ENCODE measurements at regions of chr16 and their contacts with region 1.

Region 1: GRCh38 chr16:50806099-50807062 is 64.5 kb downstream of the CYLD start:
- DNase-seq: peak; percentile 79 to 83 (median 83)
- ATAC-seq: peak; percentile 93 to 96 (median 94)
- H3K4me3 ChIP-seq: peak overlapping the region; percentile 13 to 41 (median 40)
- H3K27ac ChIP-seq: peak overlapping the region in 2 of 3 donors; percentile 57 to 69
- H3K4me1 ChIP-seq: peaks cover 0 to 12% (median 2%) of the 10 kb centered on the region in 4 donors
- H3K27me3 ChIP-seq: no peaks in the 10 kb centered on the region
- CTCF ChIP-seq: peak; percentile 84 to 92 (median 91)
- POLR2A ChIP-seq: no peak

Region 2: GRCh38 chr16:50210266-50211038 is 595.9 kb before region 1 on chr16:
- intact Hi-C with region 1: loop called in 1 of 2 experiments (anchors 10 kb)
- DNase-seq: peak; percentile 68 to 77 (median 76)
- ATAC-seq: peak; percentile 92 to 97 (median 92)
- H3K4me3 ChIP-seq: no peak overlapping the region
- H3K27ac ChIP-seq: peak overlapping the region in 1 of 3 donors; percentile 45
- H3K4me1 ChIP-seq: peaks cover 0 to 34% (median 10%) of the 10 kb centered on the region in 4 donors
- H3K27me3 ChIP-seq: no peaks in the 10 kb centered on the region
- CTCF ChIP-seq: peak; percentile 62 to 74 (median 69)
- POLR2A ChIP-seq: no peak

Region 3: DNA sequence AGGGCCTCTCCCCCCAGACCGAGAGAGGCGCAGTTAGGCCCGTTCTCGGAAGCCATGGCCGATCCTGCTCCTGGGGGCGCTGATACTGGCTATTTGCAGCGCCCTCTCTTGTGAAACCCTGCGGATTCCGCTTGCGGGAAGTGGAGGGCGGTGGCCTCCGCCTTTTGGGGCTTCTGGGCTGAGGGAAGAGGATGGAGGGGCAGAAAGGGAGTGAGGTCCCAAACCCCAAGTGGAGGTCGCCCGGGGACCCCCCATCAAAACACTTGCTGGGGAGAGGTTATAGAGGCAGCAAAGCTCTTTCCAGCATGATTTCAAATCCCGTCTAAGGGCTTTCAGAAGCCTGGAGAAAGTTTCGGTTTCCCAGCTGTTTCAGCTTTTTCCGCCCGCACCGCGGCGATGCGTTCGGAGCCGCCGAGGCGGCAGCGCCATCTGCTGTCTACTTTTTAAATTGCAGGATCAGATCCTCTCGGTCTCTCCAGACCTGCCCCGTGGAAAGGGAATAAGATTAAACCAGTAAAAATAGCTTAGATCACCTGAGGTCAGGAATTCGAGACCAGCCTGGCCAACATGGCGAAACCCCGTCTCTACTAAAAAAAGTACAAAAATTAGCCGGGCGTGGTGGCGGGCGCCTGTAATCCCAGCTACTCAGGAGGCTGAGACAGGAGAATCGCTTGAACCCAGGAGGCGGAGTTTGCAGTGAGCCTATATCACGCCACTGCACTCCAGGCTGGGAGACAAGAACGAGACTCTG is 141.1 kb before region 1 on chr16:
- intact Hi-C with region 1: loop called (anchors 5 to 10 kb)
- DNase-seq: peak; percentile 79 to 85 (median 80)
- ATAC-seq: peak; percentile 82 to 91 (median 88)
- H3K4me3 ChIP-seq: peak overlapping the region; percentile 39 to 55 (median 42)
- H3K27ac ChIP-seq: peak overlapping the region; percentile 29 to 48 (median 39)
- H3K4me1 ChIP-seq: peaks cover 0 to 15% (median 6%) of the 10 kb centered on the region in 4 donors
- H3K27me3 ChIP-seq: no peaks in the 10 kb centered on the region
- CTCF ChIP-seq: peak; percentile 88 to 94 (median 92)
- POLR2A ChIP-seq: no peak

Region 4: GRCh38 chr16:50671644-50672260 is 134.6 kb before region 1 on chr16:
- intact Hi-C with region 1: loop called (anchors 5 to 10 kb)
- DNase-seq: no peak
- ATAC-seq: peak in 1 of 4 donors; percentile 18
- H3K4me3 ChIP-seq: no peak overlapping the region
- H3K27ac ChIP-seq: no peak overlapping the region
- H3K4me1 ChIP-seq: peaks cover 0 to 12% (median 5%) of the 10 kb centered on the region in 4 donors
- H3K27me3 ChIP-seq: no peaks in the 10 kb centered on the region
- CTCF ChIP-seq: peak; percentile 36 to 48 (median 38)
- POLR2A ChIP-seq: no peak

Region 5: GRCh38 chr16:51243936-51244436 is 437.6 kb after region 1 on chr16:
- intact Hi-C with region 1: no loop called
- DNase-seq: peak; percentile 47 to 61 (median 56)
- ATAC-seq: peak; percentile 88 to 96 (median 93)
- H3K4me3 ChIP-seq: no peak overlapping the region
- H3K27ac ChIP-seq: peak overlapping the region in 2 of 3 donors; percentile 36 to 75
- H3K4me1 ChIP-seq: peaks cover 0 to 11% (median 3%) of the 10 kb centered on the region in 4 donors
- H3K27me3 ChIP-seq: no peaks in the 10 kb centered on the region
- CTCF ChIP-seq: no peak
- POLR2A ChIP-seq: no peak